Activated naive CD4-positive, alpha-beta T cell treated with anti-CD3 and anti-CD28 coated beads, Interleukin-2, amount 10 ng/mL, durations not matched to agents 7 days and 5 days (primary cell): ENCODE measurements at regions of chr6 and their contacts with region 1.

Region 1: DNA sequence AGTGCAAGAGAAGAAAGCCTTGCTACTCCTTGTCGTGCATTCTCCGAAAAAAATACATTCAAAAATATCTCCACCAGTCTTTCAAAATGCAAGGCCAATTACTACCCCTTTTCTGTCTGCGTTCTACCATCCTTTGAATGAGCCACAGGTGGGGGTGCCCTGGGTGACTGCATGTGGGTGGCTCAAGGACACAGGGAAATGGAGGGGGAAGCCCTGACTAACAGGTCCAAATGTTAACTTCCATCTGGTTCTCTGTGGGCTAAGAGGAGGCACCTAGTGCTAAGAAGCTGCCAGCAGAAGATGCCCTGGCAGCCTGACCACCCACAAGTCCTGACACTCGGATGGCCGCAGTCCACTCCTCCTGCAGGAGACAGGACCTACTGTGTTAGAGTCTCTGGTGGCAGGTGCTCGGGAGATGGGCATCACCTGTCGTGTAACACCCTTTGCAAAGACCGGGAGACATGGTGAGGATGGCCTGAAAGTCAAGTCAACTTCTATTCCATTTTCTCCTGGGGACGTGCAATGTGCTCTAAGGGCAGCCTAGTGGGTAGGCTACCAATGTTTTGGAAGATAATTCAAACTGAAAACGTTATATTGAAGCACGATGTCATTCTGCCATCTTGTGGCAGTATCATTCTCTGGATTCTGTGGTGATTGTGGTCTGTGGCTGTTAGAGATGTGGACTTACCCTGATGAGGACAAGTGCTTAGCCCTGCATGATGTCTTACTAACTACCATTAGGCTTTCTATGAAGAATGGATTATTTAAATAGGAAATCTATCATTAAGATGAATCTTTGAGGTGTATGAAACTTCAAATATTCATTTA is 27.4 kb upstream of the IGF2R start:
- DNase-seq: peak; percentile 42
- H3K4me3 Mint-ChIP-seq: no peak overlapping the region
- H3K27ac Mint-ChIP-seq: no peak overlapping the region
- H3K4me1 Mint-ChIP-seq: no peaks in the 10 kb centered on the region
- H3K27me3 Mint-ChIP-seq: peaks cover 32% of the 10 kb centered on the region

Region 2: DNA sequence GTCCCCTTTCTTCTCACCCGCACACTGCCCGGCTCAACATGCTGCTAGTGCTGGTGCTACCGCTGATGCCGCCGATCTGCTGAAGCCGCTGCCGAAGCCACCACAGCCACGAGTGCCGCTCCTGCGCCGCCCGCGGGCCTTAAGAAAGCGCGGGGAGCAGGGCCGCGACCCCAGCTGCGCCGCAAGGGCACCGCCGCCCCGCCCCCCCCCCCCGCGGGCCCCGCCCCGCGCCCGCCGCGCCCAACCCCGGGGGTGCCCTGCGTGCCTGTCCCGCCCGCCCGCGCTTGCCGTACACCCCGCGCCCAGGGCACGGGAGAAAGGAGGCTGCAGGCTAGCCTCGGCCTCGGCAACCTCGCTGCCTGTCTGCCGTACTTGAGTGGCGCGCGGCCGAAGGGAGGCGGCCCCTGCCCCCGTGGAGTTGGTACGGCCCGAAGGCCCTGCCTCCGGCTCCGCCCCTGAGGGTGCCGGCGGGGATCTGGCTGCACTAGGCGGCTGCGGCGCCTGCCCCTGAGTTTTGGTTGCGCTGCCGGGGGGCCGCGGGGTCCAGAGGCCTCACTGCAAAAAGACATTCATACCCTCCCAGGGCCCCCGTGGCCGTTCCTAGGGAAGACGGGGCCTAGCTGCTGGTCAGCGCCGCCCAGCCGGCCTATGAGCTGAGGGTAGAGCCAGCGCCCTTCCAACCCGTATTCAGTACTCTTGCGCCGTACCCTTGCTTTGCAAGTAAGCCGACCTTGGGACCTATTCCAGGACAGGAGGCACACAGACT is 248.2 kb before region 1 on chr6 and contains the start of gene SOD2:
- CTCF ChIA-PET with region 1: interaction called, 10 read pairs
- DNase-seq: peak; percentile 88
- H3K4me3 Mint-ChIP-seq: peak within 1 kb of the TSS; percentile 86
- H3K27ac Mint-ChIP-seq: peak within 1 kb of the TSS; percentile 97
- H3K4me1 Mint-ChIP-seq: peaks cover 63% of the 10 kb centered on the region
- H3K27me3 Mint-ChIP-seq: no peaks in the 10 kb centered on the region

Region 3: DNA sequence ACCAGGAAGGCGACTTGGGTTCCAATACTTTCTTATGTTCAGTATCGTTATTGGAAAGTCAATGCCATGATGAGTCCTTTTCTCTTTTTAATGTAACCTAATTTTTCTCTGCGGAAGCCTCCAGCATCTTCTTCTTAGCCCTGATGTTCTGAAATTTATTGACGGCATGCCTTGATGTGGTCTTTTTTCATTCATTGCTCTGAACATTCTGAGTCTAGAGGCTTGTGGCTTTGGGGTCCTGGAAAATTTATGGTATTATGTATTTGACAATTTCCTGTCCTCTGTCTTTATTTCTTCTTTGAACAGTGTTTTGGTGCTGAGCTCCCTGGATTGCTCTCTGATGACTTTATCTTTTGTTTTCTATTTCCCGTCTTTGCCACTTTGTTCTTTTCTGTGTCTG is 79.4 kb before region 1 on chr6:
- CTCF ChIA-PET with region 1: interaction called, 11 read pairs
- DNase-seq: no peak
- H3K4me3 Mint-ChIP-seq: no peak overlapping the region
- H3K27ac Mint-ChIP-seq: peak overlapping the region; percentile 20
- H3K4me1 Mint-ChIP-seq: peaks cover 15% of the 10 kb centered on the region
- H3K27me3 Mint-ChIP-seq: no peaks in the 10 kb centered on the region